T-cell (primary cell): ENCODE measurements at regions of chr19 and their contacts with region 1.

Region 1: GRCh38 chr19:17282488-17283255 is 971 bp downstream of the ANKLE1 start:
- DNase-seq: peak in 34 of 35 experiments; percentile 44 to 88 (median 62)
- ATAC-seq: peak; percentile 92 to 94 (median 93)
- H3K4me3 ChIP-seq: peak overlapping the region; percentile 48 to 81
- H3K4me3 Mint-ChIP-seq: peak overlapping the region; percentile 70 to 82 (median 77)
- H3K27ac ChIP-seq: no peak overlapping the region
- H3K27ac Mint-ChIP-seq: no peak overlapping the region
- H3K4me1 ChIP-seq: peaks cover 6 to 22% of the 10 kb centered on the region in 2 experiments
- H3K4me1 Mint-ChIP-seq: peaks cover 4 to 7% (median 5%) of the 10 kb centered on the region in 3 donors
- H3K27me3 ChIP-seq: peaks cover 0 to 31% of the 10 kb centered on the region in 2 experiments
- H3K27me3 Mint-ChIP-seq: peaks cover 0 to 2% of the 10 kb centered on the region in 2 donors

Region 2: DNA sequence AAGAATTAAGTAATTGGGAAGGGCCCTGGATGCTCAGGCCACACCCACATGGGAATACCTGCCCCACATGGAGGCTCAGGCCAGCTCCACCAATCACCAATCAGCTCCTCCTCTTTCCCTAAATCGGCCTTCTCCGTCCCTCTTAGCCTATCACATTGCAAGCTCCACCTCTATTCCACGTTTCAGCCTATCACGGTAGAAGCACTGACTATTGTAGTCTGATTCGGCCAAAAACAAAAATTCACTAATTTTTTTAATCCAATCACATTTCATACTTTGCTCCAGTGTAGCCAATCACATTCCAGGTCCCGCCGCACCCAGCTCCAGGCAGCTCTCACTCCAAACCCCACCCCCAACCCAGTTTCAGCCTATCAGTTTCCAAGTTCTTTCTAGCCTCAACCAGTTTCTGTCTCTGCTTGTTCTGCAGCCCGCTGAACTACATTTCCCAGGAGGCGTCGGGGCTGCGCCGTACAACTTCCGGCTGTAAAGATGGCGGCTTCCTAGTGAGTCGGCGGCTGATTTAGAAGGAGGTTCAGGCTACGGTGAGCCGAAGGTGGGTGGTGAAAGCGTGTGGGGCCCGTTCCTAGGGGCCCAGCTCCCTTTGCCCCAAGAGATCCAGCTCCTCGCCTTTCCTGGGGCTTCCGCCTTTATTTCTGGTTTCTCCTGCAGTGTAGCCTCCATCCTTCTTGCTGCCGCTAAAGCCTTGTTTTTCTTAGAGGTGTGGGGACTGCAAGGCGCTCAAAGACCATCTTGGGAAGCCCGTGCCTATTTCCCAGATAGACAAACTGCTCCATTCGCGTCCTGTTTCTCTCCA is 15.5 kb before region 1 on chr19 and contains the start of gene BABAM1:
- CTCF ChIA-PET with region 1: interaction called in 1 of 2 experiments, 10 read pairs
- POLR2A ChIA-PET with region 1: interaction called in 1 of 2 experiments, 3 read pairs
- DNase-seq: peak; percentile 80 to 99 (median 96)
- ATAC-seq: peak; percentile 92 to 97 (median 96)
- H3K4me3 ChIP-seq: peak within 1 kb of the TSS; percentile 67 to 96
- H3K4me3 Mint-ChIP-seq: peak within 1 kb of the TSS; percentile 80 to 89 (median 85)
- H3K27ac ChIP-seq: peak within 1 kb of the TSS; percentile 59
- H3K27ac Mint-ChIP-seq: peak within 1 kb of the TSS; percentile 62 to 90
- H3K4me1 ChIP-seq: peaks cover 15 to 31% of the 10 kb centered on the region in 2 experiments
- H3K4me1 Mint-ChIP-seq: peaks cover 23 to 30% (median 25%) of the 10 kb centered on the region in 3 donors
- H3K27me3 ChIP-seq: no peaks in the 10 kb centered on the region
- H3K27me3 Mint-ChIP-seq: no peaks in the 10 kb centered on the region
- total RNA-seq, gene BABAM1: 76.7 to 130 (median 117) TPM

Region 3: GRCh38 chr19:17334414-17335409 is 52.0 kb after region 1 on chr19 and contains the start of gene ANO8:
- CTCF ChIA-PET with region 1: interaction called, 7 to 13 read pairs
- POLR2A ChIA-PET with region 1: no interaction called
- DNase-seq: peak; percentile 89 to 98 (median 95)
- ATAC-seq: peak; percentile 65 to 69 (median 68)
- H3K4me3 ChIP-seq: peak within 1 kb of the TSS; percentile 56 to 71
- H3K4me3 Mint-ChIP-seq: peak within 1 kb of the TSS; percentile 84 to 92 (median 86)
- H3K27ac ChIP-seq: peak within 1 kb of the TSS; percentile 47
- H3K27ac Mint-ChIP-seq: peak within 1 kb of the TSS; percentile 80 to 91
- H3K4me1 ChIP-seq: peaks cover 9 to 61% of the 10 kb centered on the region in 2 experiments
- H3K4me1 Mint-ChIP-seq: peaks cover 42 to 53% (median 49%) of the 10 kb centered on the region in 3 donors
- H3K27me3 ChIP-seq: peaks cover 0 to 3% of the 10 kb centered on the region in 2 experiments
- H3K27me3 Mint-ChIP-seq: no peaks in the 10 kb centered on the region
- total RNA-seq, gene ANO8: 18.3 to 27.4 (median 24.9) TPM